ENCODE measurements at regions of chr2 and their contacts with region 1.

Region 1: GRCh38 chr2:70871398-70872211 is 36.0 kb upstream of the CD207 start:
- DNase-seq: no peak
- H3K4me3 ChIP-seq: no peak overlapping the region
- H3K27me3 ChIP-seq: peaks cover 12% of the 10 kb centered on the region
- CTCF ChIP-seq: peak; percentile 95

Region 2: GRCh38 chr2:70310899-70311298 is 560.7 kb before region 1 on chr2:
- CTCF ChIA-PET with region 1: no interaction called
- POLR2A ChIA-PET with region 1: no interaction called
- DNase-seq: no peak
- H3K4me3 ChIP-seq: no peak overlapping the region
- H3K27me3 ChIP-seq: peaks cover 2% of the 10 kb centered on the region; the same call in 1 of the 2 replicates
- CTCF ChIP-seq: no peak

Region 3: DNA sequence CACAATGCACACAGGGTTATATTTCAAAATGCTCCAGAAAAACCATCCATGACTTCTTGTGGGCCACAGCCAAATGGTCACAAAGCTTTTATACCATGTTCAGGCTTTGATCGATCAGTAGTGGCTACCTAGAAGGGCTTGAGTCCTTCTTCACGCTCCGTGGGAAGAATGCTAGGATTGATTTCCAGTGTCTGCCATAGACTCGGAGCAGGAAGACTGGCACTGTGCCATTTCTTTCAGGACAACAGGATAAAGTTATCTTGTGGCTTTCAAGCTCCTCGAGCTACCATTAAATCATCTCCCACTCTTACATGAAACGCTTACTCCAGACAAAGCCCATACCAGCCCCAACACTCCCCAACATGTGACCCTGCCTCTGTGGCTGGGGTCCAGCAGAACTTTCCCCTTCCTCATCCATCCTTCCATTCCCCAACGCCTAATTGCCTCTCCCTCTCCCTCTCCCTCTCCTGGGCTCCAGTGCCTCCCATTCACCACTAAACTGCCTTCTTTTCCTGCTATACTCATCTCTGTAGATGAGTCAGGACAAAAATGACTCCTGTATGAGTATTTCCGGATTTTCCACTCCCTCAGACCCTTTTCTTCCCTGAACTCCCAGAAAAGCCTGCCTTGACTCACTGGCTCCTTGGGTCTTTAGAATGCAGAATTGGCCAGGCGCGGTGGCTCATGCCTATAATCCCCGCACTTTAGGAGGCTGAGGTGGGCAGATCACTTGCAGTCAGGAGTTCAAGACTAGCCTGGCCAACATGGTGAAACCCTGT is 144.5 kb before region 1 on chr2:
- CTCF ChIA-PET with region 1: no interaction called
- POLR2A ChIA-PET with region 1: no interaction called
- DNase-seq: no peak
- H3K4me3 ChIP-seq: no peak overlapping the region
- H3K27me3 ChIP-seq: no peaks in the 10 kb centered on the region; the same call in 1 of the 2 replicates
- CTCF ChIP-seq: no peak

Region 4: DNA sequence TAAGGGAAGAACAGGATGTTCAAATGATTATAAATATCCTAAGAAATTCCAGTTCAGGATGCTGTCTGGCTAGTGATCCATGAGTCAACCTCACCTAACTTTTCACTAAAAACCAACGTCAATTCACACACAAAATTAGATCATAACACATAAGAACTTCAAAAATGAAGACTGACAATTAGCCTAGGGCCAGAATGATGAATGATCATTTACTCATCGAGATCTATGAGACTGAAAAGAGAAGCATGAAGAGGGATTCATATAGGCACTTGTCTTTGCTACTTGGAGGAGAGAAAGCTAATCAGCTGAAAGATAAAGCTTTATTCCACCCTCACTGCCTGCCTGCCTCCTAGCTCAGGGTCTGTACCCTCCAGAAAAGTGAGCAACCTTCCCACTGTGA is 133.4 kb before region 1 on chr2:
- CTCF ChIA-PET with region 1: no interaction called
- POLR2A ChIA-PET with region 1: no interaction called
- DNase-seq: no peak
- H3K4me3 ChIP-seq: no peak overlapping the region
- H3K27me3 ChIP-seq: peaks cover 8% of the 10 kb centered on the region
- CTCF ChIP-seq: no peak

Region 5: GRCh38 chr2:70850925-70851324 is 20.7 kb before region 1 on chr2:
- CTCF ChIA-PET with region 1: interaction called, 22 read pairs
- POLR2A ChIA-PET with region 1: no interaction called
- DNase-seq: no peak
- H3K4me3 ChIP-seq: no peak overlapping the region
- H3K27me3 ChIP-seq: peaks cover 3% of the 10 kb centered on the region; the same call in 1 of the 2 replicates
- CTCF ChIP-seq: no peak

Region 6: GRCh38 chr2:70919672-70920366 is 48.2 kb after region 1 on chr2:
- CTCF ChIA-PET with region 1: interaction called, 91 read pairs
- POLR2A ChIA-PET with region 1: no interaction called
- DNase-seq: peak; percentile 27
- H3K4me3 ChIP-seq: no peak overlapping the region
- H3K27me3 ChIP-seq: no peaks in the 10 kb centered on the region
- CTCF ChIP-seq: peak; percentile 92

Region 7: GRCh38 chr2:70935468-70936164 is 64.0 kb after region 1 on chr2 and contains the start of gene ATP6V1B1:
- CTCF ChIA-PET with region 1: interaction called, 46 read pairs
- POLR2A ChIA-PET with region 1: no interaction called
- DNase-seq: no peak
- H3K4me3 ChIP-seq: no peak within 1 kb of the TSS
- H3K27me3 ChIP-seq: peaks cover 3% of the 10 kb centered on the region; the same call in 1 of the 2 replicates
- CTCF ChIP-seq: no peak
- polyA plus RNA-seq, gene ATP6V1B1: 0.85 and 1.3 TPM in 2 replicates

Region 8: DNA sequence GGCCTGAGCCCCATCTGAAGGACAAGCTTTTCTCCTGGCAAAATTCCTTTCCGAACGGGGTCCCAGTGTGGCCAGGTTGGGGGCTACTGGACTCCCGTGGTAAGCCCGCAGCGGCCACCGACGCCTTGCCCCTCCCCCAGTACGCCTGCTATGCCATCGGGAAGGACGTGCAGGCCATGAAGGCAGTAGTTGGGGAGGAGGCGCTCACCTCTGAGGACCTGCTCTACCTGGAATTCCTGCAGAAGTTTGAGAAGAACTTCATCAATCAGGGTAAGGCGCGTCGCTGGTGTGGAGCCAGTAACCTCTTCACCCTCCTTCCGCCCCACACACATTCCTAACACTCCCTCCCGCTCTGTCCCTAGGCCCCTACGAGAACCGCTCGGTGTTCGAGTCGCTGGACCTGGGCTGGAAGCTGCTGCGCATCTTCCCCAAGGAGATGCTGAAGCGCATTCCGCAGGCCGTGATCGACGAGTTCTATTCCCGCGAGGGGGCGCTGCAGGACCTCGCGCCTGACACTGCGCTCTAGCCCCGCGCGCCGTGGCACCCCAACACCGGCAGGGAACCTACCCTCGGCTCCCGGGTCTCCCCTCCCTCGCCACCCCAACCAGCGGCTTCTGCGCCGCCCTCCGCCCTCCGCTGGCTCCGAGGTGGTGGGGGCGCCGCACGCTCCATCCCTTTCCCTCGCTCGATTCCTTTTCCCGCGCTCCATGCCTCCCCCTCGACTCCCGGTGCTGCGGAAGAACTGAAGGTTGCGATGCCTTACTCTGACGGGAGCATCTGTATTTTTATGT is 93.2 kb after region 1 on chr2:
- CTCF ChIA-PET with region 1: interaction called, 10 read pairs
- POLR2A ChIA-PET with region 1: no interaction called
- DNase-seq: no peak
- H3K4me3 ChIP-seq: peak overlapping the region; percentile 37
- H3K27me3 ChIP-seq: peaks cover 1% of the 10 kb centered on the region; the same call in 1 of the 2 replicates
- CTCF ChIP-seq: peak; percentile 83

Measured in BJ (cell line).